ENCODE measurements at regions of chr10 and their contacts with region 1.

Region 1: DNA sequence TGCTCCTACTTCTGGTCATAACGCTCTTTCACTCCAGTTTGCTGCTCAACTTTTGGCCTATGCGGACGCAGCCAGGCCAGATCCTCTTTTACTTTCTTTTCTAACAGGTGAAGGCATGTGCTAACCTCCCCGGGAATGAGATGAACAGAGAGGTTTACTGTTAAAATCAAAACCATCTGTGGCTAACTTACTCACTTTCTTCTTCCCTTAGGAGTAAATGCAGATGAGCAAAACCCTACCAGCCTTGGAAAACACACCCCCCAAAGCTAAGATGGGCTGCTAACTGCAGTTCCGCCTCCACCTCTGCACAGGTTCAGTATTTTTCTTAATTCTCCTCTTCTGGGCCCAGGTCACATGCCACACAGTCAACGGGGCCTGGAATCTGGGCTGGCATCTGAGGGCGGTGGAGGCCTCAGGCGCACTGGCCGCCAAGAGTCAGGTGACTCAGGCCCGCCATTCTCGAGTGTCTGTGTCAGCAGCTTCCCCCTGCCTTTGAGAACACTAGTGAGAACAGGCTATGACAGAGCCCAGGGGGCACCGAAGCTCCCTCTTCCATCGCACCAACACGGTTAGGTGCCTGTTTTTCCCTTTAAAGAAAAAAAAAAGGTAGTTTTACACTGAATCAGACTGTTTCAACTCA is 11.1 kb downstream of the FAM53B start:
- DNase-seq: peak; percentile 59
- H3K4me3 ChIP-seq: no peak overlapping the region
- H3K27ac ChIP-seq: peak overlapping the region; percentile 86 to 94 (median 89)
- H3K4me1 ChIP-seq: peaks cover 75 to 100% (median 83%) of the 10 kb centered on the region in 4 donors
- H3K27me3 ChIP-seq: no peaks in the 10 kb centered on the region
- CTCF ChIP-seq: no peak
- EP300 ChIP-seq: no peak
- POLR2A ChIP-seq: no peak

Region 2: GRCh38 chr10:124157271-124157681 is 575.8 kb before region 1 on chr10:
- in situ Hi-C with region 1: no loop called
- intact Hi-C with region 1: no loop called
- DNase-seq: no peak
- H3K4me3 ChIP-seq: no peak overlapping the region
- H3K27ac ChIP-seq: no peak overlapping the region
- H3K4me1 ChIP-seq: peaks cover 25 to 31% (median 28%) of the 10 kb centered on the region in 4 donors
- H3K27me3 ChIP-seq: no peaks in the 10 kb centered on the region
- CTCF ChIP-seq: no peak
- EP300 ChIP-seq: no peak
- POLR2A ChIP-seq: no peak

Region 3: DNA sequence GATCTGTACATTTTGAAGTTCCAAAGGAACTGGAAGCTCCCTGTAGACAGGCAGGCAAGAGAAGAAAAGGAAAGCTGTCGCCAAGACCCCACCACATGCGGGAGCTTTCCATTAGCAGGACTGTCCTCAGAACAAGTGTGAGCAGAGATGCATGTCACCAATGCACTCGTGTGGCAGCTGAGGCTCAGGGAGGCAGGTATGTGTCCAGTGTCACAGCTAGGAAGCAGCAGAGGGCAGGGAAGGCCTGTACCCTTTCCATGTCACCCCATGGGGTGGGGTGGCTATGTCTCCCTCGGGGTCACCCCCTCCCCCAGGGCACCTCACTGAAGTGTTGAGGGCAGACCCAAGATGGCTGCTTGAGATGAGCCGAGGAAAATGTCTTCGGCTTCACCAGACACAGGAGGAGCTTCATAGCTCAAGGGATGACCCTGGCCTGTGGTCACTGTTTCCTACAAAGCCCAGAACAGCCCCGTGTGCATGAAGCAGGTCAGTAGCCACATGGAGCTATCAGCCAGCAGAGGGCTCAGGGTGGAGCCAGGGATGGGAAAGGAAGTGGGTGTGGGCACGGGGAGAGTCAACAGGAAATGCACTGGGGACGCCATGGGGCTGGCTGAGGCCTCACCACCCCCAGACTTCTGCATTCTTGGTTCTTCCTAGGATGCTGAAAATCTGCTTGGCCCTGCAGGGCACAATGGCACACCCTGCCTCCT is 85.5 kb before region 1 on chr10:
- in situ Hi-C with region 1: loop called in 2 of 4 experiments (anchors 10 to 25 kb)
- intact Hi-C with region 1: no loop called
- DNase-seq: peak; percentile 79
- H3K4me3 ChIP-seq: no peak overlapping the region
- H3K27ac ChIP-seq: peak overlapping the region; percentile 62 to 81 (median 74)
- H3K4me1 ChIP-seq: peaks cover 31 to 66% (median 42%) of the 10 kb centered on the region in 4 donors
- H3K27me3 ChIP-seq: no peaks in the 10 kb centered on the region
- CTCF ChIP-seq: peak; percentile 12 to 60 (median 28)
- EP300 ChIP-seq: no peak
- POLR2A ChIP-seq: no peak

Measured in transverse colon (tissue), 4 donors.